ENCODE measurements at regions of chr15 and their contacts with region 1.

Region 1: GRCh38 chr15:51758645-51759044 is 7.2 kb downstream of the TMOD2 start:
- H3K4me3 ChIP-seq: no peak overlapping the region
- H3K27ac ChIP-seq: no peak overlapping the region
- H3K4me1 ChIP-seq: no peaks in the 10 kb centered on the region
- CTCF ChIP-seq: no peak

Region 2: GRCh38 chr15:51524376-51524775 is 234.3 kb before region 1 on chr15:
- CTCF ChIA-PET with region 1: no interaction called
- POLR2A ChIA-PET with region 1: no interaction called
- H3K4me3 ChIP-seq: no peak overlapping the region
- H3K27ac ChIP-seq: no peak overlapping the region
- H3K4me1 ChIP-seq: no peaks in the 10 kb centered on the region
- CTCF ChIP-seq: no peak

Region 3: GRCh38 chr15:51776952-51777574 is 18.4 kb after region 1 on chr15:
- CTCF ChIA-PET with region 1: interaction called, 21 read pairs
- POLR2A ChIA-PET with region 1: no interaction called
- H3K4me3 ChIP-seq: no peak overlapping the region
- H3K27ac ChIP-seq: no peak overlapping the region
- H3K4me1 ChIP-seq: no peaks in the 10 kb centered on the region
- CTCF ChIP-seq: no peak